Caco-2 (cell line): ENCODE measurements at regions of chr11 and their contacts with region 1.

Region 1: GRCh38 chr11:126194121-126194543 is 17.3 kb downstream of the RPUSD4 start:
- DNase-seq: peak in 1 of 2 experiments; percentile 71
- H3K4me3 ChIP-seq: no peak overlapping the region
- H3K4me3 Mint-ChIP-seq: no peak overlapping the region
- H3K27ac Mint-ChIP-seq: no peak overlapping the region
- H3K4me1 ChIP-seq: no peaks in the 10 kb centered on the region
- H3K4me1 Mint-ChIP-seq: no peaks in the 10 kb centered on the region
- H3K27me3 ChIP-seq: no peaks in the 10 kb centered on the region
- H3K27me3 Mint-ChIP-seq: no peaks in the 10 kb centered on the region
- CTCF ChIP-seq: peak; percentile 77 to 97

Region 2: DNA sequence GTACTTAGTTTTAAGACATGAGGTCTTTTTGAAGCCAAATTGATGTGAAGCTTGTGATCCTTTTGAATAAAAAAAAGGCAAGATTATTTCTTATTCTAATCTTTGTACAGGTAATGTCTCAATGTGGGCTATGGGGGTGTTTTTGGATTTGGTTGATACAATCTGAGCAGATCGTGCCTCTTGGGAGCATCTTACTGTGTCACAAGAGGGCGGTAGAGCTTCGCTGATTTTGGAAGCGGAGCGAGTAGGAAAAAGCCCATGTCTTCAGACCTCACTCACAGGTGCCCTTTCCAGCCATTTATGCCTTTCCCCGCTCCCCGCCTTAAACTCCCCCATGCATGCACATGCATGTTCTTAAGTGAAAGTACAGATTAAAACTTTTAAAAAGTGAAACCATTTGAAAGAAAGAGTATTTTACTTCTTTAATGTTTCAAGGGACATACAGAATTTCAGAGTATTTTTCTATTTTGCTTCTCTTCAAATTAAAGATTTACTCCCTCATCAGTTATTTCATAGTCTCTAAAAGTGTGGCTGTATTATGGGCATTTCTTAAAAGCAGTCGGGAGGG is 271.0 kb before region 1 on chr11:
- CTCF ChIA-PET with region 1: interaction called, 10 read pairs
- POLR2A ChIA-PET with region 1: no interaction called
- intact Hi-C with region 1: loop called (anchors 1 kb)
- DNase-seq: peak; percentile 79 to 84
- H3K4me3 ChIP-seq: no peak overlapping the region
- H3K4me3 Mint-ChIP-seq: no peak overlapping the region
- H3K27ac Mint-ChIP-seq: no peak overlapping the region
- H3K4me1 ChIP-seq: no peaks in the 10 kb centered on the region
- H3K4me1 Mint-ChIP-seq: no peaks in the 10 kb centered on the region
- H3K27me3 ChIP-seq: 0 out of 2 replicates have a peak, but pooled peaks cover 2% of the 10 kb centered on the region
- H3K27me3 Mint-ChIP-seq: peaks cover 14% of the 10 kb centered on the region
- CTCF ChIP-seq: peak; percentile 95 to 98

Region 3: DNA sequence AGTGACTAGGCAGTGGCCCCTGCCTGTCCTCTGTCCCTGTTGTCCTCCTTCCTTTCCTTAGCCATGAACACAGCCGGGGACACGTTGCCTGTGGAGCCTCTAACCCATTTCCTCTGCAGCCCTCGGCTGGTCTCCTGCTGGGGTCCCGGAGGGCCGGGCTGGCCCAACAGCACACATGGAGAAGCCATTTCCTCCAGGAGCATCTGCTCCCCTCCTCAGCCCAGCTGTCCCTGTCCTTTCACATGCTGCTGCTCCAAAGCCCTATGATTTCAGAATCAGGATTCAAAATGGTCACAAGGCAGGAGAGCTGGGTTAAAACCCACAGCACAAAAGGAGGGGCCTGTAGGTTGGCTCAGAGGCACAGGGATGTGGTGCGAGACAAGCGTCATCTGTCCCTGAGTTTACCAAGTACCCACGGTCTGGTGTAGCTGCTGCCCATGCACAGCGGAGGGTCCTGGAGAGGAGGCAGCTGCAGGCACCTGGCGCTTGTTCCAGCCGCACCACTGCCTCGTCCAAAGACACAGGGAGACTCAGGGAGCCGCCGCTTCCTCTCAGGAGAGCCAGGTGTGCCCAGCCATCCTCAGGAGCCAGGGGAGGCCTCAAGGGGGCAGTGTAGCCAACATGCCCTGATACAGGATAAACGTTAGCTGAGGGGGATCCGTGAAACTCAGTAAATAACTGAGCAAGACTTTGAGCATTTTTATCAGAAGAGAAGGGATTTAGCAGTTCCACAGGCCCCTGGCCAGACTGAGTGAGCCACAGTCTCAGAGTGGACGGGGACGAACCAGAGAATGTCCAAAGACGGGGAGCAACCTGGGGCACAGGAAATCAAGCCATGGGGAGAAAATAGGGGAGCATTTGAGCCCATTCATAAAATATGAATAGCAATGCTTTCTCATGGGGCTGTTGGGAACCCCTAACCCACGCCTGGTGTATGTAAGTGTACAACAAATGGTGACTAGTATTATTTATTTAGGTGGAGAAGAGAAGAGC is 252.2 kb before region 1 on chr11:
- CTCF ChIA-PET with region 1: interaction called, 31 read pairs
- POLR2A ChIA-PET with region 1: interaction called, 3 read pairs
- intact Hi-C with region 1: loop called (anchors 1 kb)
- DNase-seq: peak; percentile 74 to 78
- H3K4me3 ChIP-seq: no peak overlapping the region
- H3K4me3 Mint-ChIP-seq: no peak overlapping the region
- H3K27ac Mint-ChIP-seq: no peak overlapping the region
- H3K4me1 ChIP-seq: no peaks in the 10 kb centered on the region
- H3K4me1 Mint-ChIP-seq: peaks cover 5% of the 10 kb centered on the region
- H3K27me3 ChIP-seq: 0 out of 2 replicates have a peak, but pooled peaks cover 1% of the 10 kb centered on the region
- H3K27me3 Mint-ChIP-seq: peaks cover 6% of the 10 kb centered on the region
- CTCF ChIP-seq: peak; percentile 81 to 97

Region 4: DNA sequence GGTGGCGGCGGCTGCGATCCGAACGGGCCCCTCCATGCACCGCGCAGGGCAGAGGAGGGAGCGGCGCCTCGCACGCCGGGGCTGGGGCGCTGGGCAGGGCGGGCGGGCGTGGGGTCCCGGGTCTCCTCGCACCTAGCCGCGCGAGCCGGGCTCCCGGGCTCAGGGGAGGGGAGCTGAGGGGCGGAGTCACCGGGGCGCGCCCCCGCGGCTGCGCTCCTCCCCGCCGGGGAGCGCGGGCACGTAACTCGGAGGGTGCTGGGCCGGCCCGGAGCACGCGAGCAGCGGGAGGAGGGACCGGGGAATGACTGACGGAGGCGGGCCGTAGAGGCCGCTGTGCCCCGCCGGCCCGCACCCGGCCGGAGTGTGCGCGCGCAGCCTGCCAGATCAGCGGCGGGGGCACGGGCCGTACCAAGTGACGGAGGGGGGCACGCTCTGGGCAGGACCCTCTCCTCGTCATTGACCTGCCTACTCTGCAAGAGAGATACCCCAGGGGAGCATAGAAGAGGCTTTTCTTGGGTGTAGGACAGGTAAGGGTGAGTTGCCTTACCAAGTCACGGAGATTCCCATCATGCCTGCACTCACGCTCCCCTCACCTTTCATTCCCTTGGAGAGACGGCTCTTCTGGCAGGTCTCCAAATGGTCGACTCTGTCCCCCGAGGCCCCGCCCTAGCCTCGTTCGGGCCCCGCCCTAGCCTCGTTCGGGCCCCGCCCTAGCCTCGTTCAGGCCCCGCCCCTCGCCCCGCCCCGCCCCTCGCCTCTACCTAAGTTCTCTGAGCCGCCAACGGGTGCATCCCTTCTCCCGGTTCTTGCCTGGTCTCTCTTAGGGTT is 131.2 kb before region 1 on chr11 and contains the start of gene CDON:
- CTCF ChIA-PET with region 1: interaction called, 15 read pairs
- POLR2A ChIA-PET with region 1: no interaction called
- intact Hi-C with region 1: loop called (anchors 1 kb)
- DNase-seq: peak; percentile 95 to 98
- H3K4me3 ChIP-seq: peak within 1 kb of the TSS; percentile 89
- H3K4me3 Mint-ChIP-seq: peak within 1 kb of the TSS; percentile 95
- H3K27ac Mint-ChIP-seq: peak within 1 kb of the TSS; percentile 100
- H3K4me1 ChIP-seq: peaks cover 8% of the 10 kb centered on the region
- H3K4me1 Mint-ChIP-seq: peaks cover 8% of the 10 kb centered on the region
- H3K27me3 ChIP-seq: no peaks in the 10 kb centered on the region
- H3K27me3 Mint-ChIP-seq: peaks cover 16% of the 10 kb centered on the region
- CTCF ChIP-seq: peak in 1 of 2 experiments; percentile 6
- total RNA-seq, gene CDON: 5.7 and 6.8 TPM in 2 replicates

Region 5: DNA sequence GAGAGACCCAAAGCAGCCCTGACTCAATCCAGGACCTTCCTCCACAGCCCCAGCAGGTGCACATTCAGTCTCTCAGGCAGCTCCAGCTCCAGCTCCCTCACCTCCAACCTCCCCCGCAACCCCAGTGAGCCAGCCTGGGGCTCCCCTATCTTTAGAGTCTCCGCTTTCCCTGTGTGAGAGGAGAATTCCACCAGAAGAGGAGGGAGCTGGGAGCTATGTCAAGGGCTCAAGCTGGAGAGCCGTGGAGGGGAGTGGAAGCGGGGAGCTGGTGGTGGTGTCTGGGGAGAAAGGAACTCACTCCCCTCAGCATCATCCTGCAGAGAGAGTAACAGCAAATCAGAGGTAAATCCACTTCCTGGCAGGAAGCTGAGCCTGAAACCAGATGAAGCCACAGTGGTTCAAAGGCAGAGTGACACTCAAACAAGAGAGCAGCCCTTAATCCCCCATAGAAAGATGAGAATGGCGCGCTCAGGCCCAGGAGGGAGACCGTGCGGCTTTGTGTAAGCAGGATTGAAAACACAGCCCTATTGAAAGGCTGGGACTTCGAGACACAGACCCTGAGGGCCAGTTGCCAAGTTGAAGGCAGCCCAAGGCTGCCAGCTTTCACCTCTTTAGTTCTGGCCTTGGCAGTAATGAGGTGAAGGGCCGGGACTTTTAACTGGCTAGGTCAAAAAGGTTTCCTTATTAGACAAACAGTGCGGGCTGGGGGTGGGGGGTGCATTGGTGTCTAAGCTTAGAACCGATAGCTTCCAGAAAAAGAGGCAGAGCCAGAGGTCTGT is 110.1 kb before region 1 on chr11:
- CTCF ChIA-PET with region 1: no interaction called
- POLR2A ChIA-PET with region 1: no interaction called
- intact Hi-C with region 1: loop called (anchors 2 kb)
- DNase-seq: no peak
- H3K4me3 ChIP-seq: no peak overlapping the region
- H3K4me3 Mint-ChIP-seq: no peak overlapping the region
- H3K27ac Mint-ChIP-seq: no peak overlapping the region
- H3K4me1 ChIP-seq: no peaks in the 10 kb centered on the region
- H3K4me1 Mint-ChIP-seq: no peaks in the 10 kb centered on the region
- H3K27me3 ChIP-seq: no peaks in the 10 kb centered on the region
- H3K27me3 Mint-ChIP-seq: no peaks in the 10 kb centered on the region
- CTCF ChIP-seq: no peak

Region 6: DNA sequence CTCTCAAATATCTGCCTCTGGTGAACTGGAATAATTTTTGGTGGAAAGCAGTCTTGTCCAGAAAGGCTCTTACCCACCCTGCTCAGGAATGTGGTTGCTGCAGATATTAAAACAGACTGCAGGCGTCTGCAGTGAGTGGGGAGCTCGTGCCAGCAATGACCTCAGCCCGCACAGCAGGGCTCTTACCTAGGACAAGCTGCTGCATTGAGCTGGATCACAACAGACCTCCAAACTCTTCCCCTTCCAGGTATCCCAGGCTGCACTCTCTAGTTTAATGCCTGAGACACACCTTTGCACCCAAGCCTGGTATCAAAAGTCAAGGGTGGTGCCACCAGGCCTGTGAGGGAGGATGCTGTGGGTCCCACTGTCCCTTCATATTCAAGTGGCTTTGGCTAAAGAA is 61.8 kb before region 1 on chr11:
- CTCF ChIA-PET with region 1: interaction called, 10 read pairs
- POLR2A ChIA-PET with region 1: no interaction called
- intact Hi-C with region 1: no loop called
- DNase-seq: no peak
- H3K4me3 ChIP-seq: no peak overlapping the region
- H3K4me3 Mint-ChIP-seq: no peak overlapping the region
- H3K27ac Mint-ChIP-seq: no peak overlapping the region
- H3K4me1 ChIP-seq: peaks cover 7% of the 10 kb centered on the region
- H3K4me1 Mint-ChIP-seq: peaks cover 19% of the 10 kb centered on the region
- H3K27me3 ChIP-seq: no peaks in the 10 kb centered on the region
- H3K27me3 Mint-ChIP-seq: no peaks in the 10 kb centered on the region
- CTCF ChIP-seq: no peak

Region 7: GRCh38 chr11:126140932-126141291 is 53.2 kb before region 1 on chr11:
- CTCF ChIA-PET with region 1: interaction called, 4 read pairs
- POLR2A ChIA-PET with region 1: no interaction called
- intact Hi-C with region 1: loop called (anchors 1 kb)
- DNase-seq: no peak
- H3K4me3 ChIP-seq: no peak overlapping the region
- H3K4me3 Mint-ChIP-seq: no peak overlapping the region
- H3K27ac Mint-ChIP-seq: no peak overlapping the region
- H3K4me1 ChIP-seq: no peaks in the 10 kb centered on the region
- H3K4me1 Mint-ChIP-seq: no peaks in the 10 kb centered on the region
- H3K27me3 ChIP-seq: no peaks in the 10 kb centered on the region
- H3K27me3 Mint-ChIP-seq: no peaks in the 10 kb centered on the region
- CTCF ChIP-seq: no peak